CD8-positive, alpha-beta T cell (primary cell): ENCODE measurements at regions of chr4 and their contacts with region 1.

Region 1: DNA sequence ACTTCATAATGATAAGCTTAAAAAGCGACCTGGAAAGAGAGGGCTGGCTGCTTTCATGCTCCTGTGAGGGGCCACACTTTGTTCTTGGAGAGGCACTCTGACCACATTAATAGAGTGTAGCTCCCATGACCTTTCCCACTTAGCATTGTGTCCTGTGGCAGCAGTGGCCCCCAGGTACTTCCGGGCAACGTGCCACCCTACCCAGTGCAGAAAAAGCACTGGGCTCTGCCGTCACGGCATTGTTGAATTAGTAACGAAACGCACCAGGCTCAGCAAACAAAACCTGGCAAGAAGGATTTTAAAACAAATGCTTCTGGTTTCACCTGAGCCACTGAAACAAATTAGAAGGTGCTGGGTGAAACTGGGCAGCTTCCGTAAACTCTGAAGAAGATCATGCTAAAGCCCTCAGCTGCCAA is 5.4 kb upstream of the SORBS2 start:
- DNase-seq: no peak
- ATAC-seq: no peak
- H3K4me3 ChIP-seq: no peak overlapping the region
- H3K4me3 Mint-ChIP-seq: no peak overlapping the region
- H3K27ac ChIP-seq: no peak overlapping the region
- H3K27ac Mint-ChIP-seq: no peak overlapping the region
- H3K4me1 ChIP-seq: no peaks in the 10 kb centered on the region
- H3K4me1 Mint-ChIP-seq: no peaks in the 10 kb centered on the region
- H3K27me3 ChIP-seq: no peaks in the 10 kb centered on the region
- H3K27me3 Mint-ChIP-seq: peaks cover 4% of the 10 kb centered on the region
- CTCF ChIP-seq: no peak

Region 2: GRCh38 chr4:184762100-184762499 is 1055.3 kb before region 1 on chr4:
- CTCF ChIA-PET with region 1: no interaction called
- POLR2A ChIA-PET with region 1: no interaction called
- intact Hi-C with region 1: no loop called
- DNase-seq: peak in 7 of 9 experiments; percentile 16 to 85 (median 39)
- ATAC-seq: peak; percentile 98
- H3K4me3 ChIP-seq: peak overlapping the region in 1 of 2 experiments; percentile 13
- H3K4me3 Mint-ChIP-seq: peak overlapping the region; percentile 66
- H3K27ac ChIP-seq: peak overlapping the region; percentile 1 to 70
- H3K27ac Mint-ChIP-seq: peak overlapping the region; percentile 88
- H3K4me1 ChIP-seq: peaks cover 15% of the 10 kb centered on the region
- H3K4me1 Mint-ChIP-seq: peaks cover 17% of the 10 kb centered on the region
- H3K27me3 ChIP-seq: no peaks in the 10 kb centered on the region
- H3K27me3 Mint-ChIP-seq: no peaks in the 10 kb centered on the region
- CTCF ChIP-seq: peak; percentile 16

Region 3: DNA sequence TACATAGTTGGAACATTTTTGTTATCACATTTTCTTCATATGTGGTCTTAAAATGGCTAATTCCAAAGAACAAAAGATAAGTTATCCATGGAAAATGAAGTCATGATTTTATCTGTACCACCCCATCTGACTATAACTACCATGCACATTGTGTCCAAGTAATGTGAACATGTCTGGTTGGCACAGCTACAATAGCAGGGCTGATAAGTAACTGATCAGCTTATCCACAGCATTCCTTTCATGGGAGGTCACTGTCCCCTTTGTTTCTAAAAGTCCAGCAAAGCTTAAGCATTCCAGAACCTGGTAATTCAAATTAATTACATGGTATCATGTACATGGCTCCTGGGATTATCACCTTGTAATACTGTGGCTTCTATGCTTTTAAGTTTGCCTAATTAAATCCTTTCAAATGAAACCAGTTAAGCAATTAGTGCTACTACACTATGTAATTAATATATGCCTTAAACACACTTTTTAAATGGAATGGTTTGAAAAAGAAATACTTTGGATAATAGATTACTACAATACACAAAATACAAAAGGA is 15.7 kb after region 1 on chr4:
- CTCF ChIA-PET with region 1: no interaction called
- POLR2A ChIA-PET with region 1: no interaction called
- intact Hi-C with region 1: loop called in 1 of 2 experiments (anchors 1 kb)
- DNase-seq: no peak
- ATAC-seq: no peak
- H3K4me3 ChIP-seq: no peak overlapping the region
- H3K4me3 Mint-ChIP-seq: no peak overlapping the region
- H3K27ac ChIP-seq: no peak overlapping the region
- H3K27ac Mint-ChIP-seq: no peak overlapping the region
- H3K4me1 ChIP-seq: no peaks in the 10 kb centered on the region
- H3K4me1 Mint-ChIP-seq: no peaks in the 10 kb centered on the region
- H3K27me3 ChIP-seq: no peaks in the 10 kb centered on the region
- H3K27me3 Mint-ChIP-seq: peaks cover 3% of the 10 kb centered on the region
- CTCF ChIP-seq: no peak